ENCODE measurements at regions of chr5 and their contacts with region 1.

Region 1: DNA sequence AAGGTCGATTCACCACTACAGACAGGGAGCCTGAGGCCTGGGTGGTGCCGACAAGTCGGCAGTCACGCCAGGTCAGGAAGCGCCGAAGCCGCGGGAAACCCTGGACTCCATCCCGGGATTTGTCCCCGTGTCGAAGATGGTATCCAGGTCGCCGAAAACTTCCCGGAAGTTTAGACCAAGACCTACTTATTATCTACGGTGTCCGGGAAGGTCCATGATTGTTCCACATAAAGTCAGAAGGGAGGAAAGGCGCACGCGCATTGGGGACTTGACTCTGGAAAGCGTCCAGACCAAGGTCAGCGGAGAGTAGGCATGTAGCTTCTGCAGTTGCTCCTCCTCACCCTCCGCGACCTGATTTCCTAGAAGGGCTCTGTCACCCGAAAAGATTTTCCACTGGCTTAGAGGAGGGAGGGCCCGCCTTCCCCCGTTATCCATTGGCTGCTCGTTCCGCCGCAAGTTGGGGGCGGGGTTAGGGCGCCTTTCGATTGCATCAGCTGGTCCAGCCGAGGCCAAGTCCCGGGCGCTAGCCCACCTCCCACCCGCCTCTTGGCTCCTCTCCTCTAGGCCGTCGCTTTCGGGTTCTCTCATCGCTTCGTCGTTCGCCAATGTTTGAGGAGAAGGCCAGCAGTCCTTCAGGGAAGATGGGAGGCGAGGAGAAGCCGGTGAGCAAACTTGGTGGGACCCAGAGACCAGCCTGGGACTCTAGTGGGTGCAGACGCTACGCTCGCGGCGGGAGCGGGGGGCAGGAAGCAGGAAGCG is at the start of gene TARS1:
- DNase-seq: peak; percentile 100
- H3K4me3 ChIP-seq: peak within 1 kb of the TSS; percentile 68 to 93 (median 76)
- H3K27ac ChIP-seq: peak within 1 kb of the TSS; percentile 73
- H3K4me1 ChIP-seq: peaks cover 22% of the 10 kb centered on the region
- H3K27me3 ChIP-seq: no peaks in the 10 kb centered on the region
- CTCF ChIP-seq: no peak
- POLR2A ChIP-seq: peak; percentile 92
- total RNA-seq, gene TARS1: 175 and 184 TPM in 2 replicates

Region 2: GRCh38 chr5:32098291-32098690 is 1342.4 kb before region 1 on chr5:
- CTCF ChIA-PET with region 1: no interaction called
- POLR2A ChIA-PET with region 1: no interaction called
- dilution Hi-C with region 1: no loop called
- intact Hi-C with region 1: loop called (anchors 2 kb)
- DNase-seq: peak; percentile 96
- H3K4me3 ChIP-seq: peak overlapping the region in 1 of 3 experiments; percentile 43
- H3K27ac ChIP-seq: peak overlapping the region; percentile 96
- H3K4me1 ChIP-seq: peaks cover 45% of the 10 kb centered on the region
- H3K27me3 ChIP-seq: no peaks in the 10 kb centered on the region
- CTCF ChIP-seq: no peak
- POLR2A ChIP-seq: no peak

Region 3: DNA sequence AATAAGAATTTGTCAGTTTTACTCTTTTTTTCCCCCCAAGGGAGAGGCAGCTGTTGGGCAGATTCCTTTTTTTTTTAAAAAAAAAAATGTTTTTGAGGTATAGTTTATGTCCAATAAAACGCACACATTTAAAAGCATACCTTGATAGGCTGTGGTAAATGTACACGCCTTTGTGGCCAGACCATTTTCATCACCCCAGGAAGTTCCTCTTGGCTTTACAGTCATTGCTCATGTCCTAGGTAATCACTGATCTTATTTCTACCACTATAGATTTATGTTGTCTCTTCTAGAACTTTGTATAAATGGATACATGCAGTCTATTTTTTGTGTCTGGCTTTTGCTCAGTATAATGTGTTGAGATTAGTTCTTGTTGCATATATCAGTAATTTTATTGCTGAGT is 845.5 kb before region 1 on chr5:
- CTCF ChIA-PET with region 1: interaction called, 3 read pairs
- POLR2A ChIA-PET with region 1: no interaction called
- dilution Hi-C with region 1: no loop called
- intact Hi-C with region 1: loop called (anchors 5 kb)
- DNase-seq: no peak
- H3K4me3 ChIP-seq: no peak overlapping the region
- H3K27ac ChIP-seq: no peak overlapping the region
- H3K4me1 ChIP-seq: peaks cover 40% of the 10 kb centered on the region
- H3K27me3 ChIP-seq: no peaks in the 10 kb centered on the region
- CTCF ChIP-seq: no peak
- POLR2A ChIP-seq: no peak

Region 4: GRCh38 chr5:32760091-32760509 is 680.6 kb before region 1 on chr5:
- CTCF ChIA-PET with region 1: no interaction called
- POLR2A ChIA-PET with region 1: no interaction called
- dilution Hi-C with region 1: no loop called
- intact Hi-C with region 1: no loop called
- DNase-seq: no peak
- H3K4me3 ChIP-seq: no peak overlapping the region
- H3K27ac ChIP-seq: no peak overlapping the region
- H3K4me1 ChIP-seq: no peaks in the 10 kb centered on the region
- H3K27me3 ChIP-seq: no peaks in the 10 kb centered on the region
- CTCF ChIP-seq: no peak
- POLR2A ChIP-seq: no peak

Region 5: GRCh38 chr5:33068786-33069185 is 371.9 kb before region 1 on chr5:
- CTCF ChIA-PET with region 1: no interaction called
- POLR2A ChIA-PET with region 1: no interaction called
- dilution Hi-C with region 1: no loop called
- intact Hi-C with region 1: no loop called
- DNase-seq: no peak
- H3K4me3 ChIP-seq: no peak overlapping the region
- H3K27ac ChIP-seq: no peak overlapping the region
- H3K4me1 ChIP-seq: no peaks in the 10 kb centered on the region
- H3K27me3 ChIP-seq: no peaks in the 10 kb centered on the region
- CTCF ChIP-seq: no peak
- POLR2A ChIP-seq: no peak

Region 6: GRCh38 chr5:33321026-33321425 is 119.6 kb before region 1 on chr5:
- CTCF ChIA-PET with region 1: interaction called, 3 read pairs
- POLR2A ChIA-PET with region 1: no interaction called
- dilution Hi-C with region 1: no loop called
- intact Hi-C with region 1: loop called (anchors 5 kb)
- DNase-seq: peak; percentile 98
- H3K4me3 ChIP-seq: peak overlapping the region in 1 of 3 experiments; percentile 13
- H3K27ac ChIP-seq: peak overlapping the region; percentile 98
- H3K4me1 ChIP-seq: peaks cover 34% of the 10 kb centered on the region
- H3K27me3 ChIP-seq: no peaks in the 10 kb centered on the region
- CTCF ChIP-seq: no peak
- POLR2A ChIP-seq: no peak

Region 7: DNA sequence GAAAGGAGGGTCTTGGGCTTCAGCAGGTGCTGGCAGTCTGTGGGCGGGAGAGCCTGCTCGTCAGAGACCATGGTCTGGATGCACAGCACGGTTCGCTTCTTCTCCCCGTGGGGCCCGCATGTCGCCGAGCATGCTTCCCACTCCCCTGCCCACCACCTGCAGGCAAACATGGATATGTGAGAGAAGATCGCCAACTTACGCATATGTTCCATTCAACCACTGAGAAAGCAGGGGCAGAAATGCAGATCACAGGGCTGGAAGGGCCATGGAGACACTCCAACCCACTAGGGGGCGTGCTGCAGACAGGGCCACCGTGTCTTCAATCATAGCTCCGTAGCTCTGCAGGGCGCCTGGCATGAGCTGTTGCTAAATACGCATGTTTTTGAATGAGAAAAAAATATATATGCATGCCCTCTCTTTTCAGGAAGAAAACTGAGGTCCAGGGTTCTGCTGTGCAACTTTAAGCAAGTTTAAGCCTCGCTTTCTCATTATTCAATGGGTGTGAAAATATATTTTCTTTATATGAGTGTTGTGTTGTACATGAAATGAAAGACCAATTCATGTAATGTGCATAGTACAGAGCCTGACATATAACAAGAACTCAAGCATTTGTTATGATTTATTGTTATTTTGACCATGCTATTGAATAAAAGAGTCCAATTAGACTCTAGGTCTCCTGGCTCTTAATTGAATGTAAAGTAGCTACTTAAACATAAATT is 148.2 kb after region 1 on chr5:
- CTCF ChIA-PET with region 1: interaction called, 12 read pairs
- POLR2A ChIA-PET with region 1: no interaction called
- dilution Hi-C with region 1: no loop called
- intact Hi-C with region 1: loop called (anchors 10 kb)
- DNase-seq: peak; percentile 23
- H3K4me3 ChIP-seq: no peak overlapping the region
- H3K27ac ChIP-seq: no peak overlapping the region
- H3K4me1 ChIP-seq: no peaks in the 10 kb centered on the region
- H3K27me3 ChIP-seq: no peaks in the 10 kb centered on the region
- CTCF ChIP-seq: peak; percentile 67 to 89
- POLR2A ChIP-seq: no peak

Region 8: DNA sequence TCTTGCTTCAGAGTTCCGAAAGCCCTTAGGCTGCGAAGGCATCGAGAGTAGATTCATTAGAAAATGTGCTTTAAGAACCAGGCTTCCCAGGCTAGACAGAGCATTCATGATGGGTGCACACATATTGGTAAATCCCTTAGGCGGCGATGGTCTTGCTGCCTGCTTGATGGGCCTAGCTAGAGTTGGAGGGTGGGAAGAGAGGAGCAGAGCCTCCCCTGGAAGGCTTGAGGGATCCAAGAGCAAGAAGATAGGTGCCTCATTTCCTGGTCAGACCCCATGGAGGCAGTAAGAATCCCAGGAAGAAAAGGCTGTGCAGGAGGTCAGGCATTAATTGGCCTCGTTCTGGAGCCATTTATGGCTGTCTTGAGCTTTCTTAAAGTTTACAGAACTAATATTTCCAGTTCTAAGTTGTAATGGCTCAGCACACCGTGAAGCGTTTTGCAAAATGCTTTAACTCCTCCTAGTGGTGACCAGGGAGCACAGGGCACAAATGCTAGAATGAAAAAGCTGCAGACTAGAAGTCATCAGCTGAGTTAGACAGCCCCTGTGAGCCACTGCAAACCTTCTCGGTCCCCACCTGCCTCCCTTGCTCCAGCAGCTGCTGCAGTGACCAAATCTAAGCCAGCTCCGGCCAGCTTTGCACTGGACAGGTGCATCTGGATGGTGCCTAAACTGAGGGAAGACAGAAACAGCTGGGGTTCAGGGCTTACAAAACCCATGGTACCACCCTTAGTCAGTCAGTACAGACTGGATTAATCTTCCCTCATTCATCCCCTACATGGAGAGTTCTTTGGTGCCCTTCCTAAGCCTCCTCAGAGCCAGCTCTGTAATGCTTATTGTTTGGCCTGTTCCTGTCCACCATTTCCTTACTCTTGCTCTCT is 529.2 kb after region 1 on chr5:
- CTCF ChIA-PET with region 1: interaction called, 161 read pairs
- POLR2A ChIA-PET with region 1: no interaction called
- dilution Hi-C with region 1: no loop called
- intact Hi-C with region 1: loop called (anchors 1 kb)
- DNase-seq: peak; percentile 47
- H3K4me3 ChIP-seq: no peak overlapping the region
- H3K27ac ChIP-seq: no peak overlapping the region
- H3K4me1 ChIP-seq: no peaks in the 10 kb centered on the region
- H3K27me3 ChIP-seq: peaks cover 2 to 3% of the 10 kb centered on the region in 2 experiments
- CTCF ChIP-seq: peak; percentile 64 to 65
- POLR2A ChIP-seq: no peak